Ascending aorta (tissue), 2 donors: ENCODE measurements at regions of chr18 and their contacts with region 1.

Region 1: DNA sequence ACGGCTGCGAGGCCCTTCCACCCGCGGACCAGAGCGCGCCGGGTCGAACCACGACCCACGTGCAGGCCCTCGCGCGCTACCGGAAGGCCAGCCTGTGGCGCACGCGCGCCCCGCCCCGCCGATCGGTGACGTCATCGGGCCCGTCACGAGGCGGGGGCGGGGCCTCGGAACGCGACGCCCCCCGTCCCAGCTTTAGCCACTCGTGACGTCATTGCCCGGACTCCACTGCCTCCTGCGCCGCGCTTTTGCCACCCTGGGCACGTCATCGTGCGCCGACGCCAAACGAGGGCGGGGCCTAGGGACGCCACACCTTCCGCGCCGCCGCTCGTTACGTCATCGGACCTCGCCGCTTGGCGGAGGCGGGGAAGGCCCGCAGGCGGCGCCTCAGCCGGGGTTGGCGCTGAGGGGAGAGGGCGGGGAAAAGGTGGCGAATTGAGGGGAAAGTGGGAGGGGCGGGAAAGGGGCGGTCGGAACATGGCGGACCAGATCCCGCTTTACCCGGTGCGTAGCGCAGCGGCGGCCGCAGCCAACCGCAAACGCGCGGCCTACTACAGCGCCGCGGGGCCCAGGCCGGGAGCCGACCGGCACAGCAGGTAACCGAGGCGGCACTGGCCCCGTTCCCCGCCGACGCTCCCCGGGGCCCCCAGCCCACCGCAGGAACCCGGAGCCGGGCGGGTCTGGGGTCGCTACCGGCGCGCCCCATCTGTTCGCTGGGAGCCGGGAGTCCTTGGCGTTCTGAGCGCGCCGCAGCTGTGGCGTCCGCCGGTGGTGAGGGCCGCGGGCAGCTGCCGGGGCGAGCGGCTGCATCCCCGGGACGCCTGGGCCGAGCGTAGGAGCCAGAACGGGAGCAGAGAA is at the start of gene ATP9B:
- DNase-seq: peak; percentile 87 to 98
- H3K4me3 ChIP-seq: peak within 1 kb of the TSS; percentile 89 to 91
- H3K27ac ChIP-seq: peak within 1 kb of the TSS; percentile 93 to 99
- H3K4me1 ChIP-seq: peaks cover 3 to 17% of the 10 kb centered on the region in 2 donors
- H3K27me3 ChIP-seq: no peaks in the 10 kb centered on the region
- CTCF ChIP-seq: no peak
- total RNA-seq, gene ATP9B: 14.4 TPM

Region 2: GRCh38 chr18:79217979-79218604 is 148.9 kb after region 1 on chr18:
- intact Hi-C with region 1: loop called (anchors 5 kb)
- DNase-seq: no peak
- H3K4me3 ChIP-seq: peak overlapping the region; percentile 6 to 32
- H3K27ac ChIP-seq: peak overlapping the region; percentile 37 to 66
- H3K4me1 ChIP-seq: peaks cover 0 to 4% of the 10 kb centered on the region in 2 donors
- H3K27me3 ChIP-seq: no peaks in the 10 kb centered on the region
- CTCF ChIP-seq: no peak

Region 3: DNA sequence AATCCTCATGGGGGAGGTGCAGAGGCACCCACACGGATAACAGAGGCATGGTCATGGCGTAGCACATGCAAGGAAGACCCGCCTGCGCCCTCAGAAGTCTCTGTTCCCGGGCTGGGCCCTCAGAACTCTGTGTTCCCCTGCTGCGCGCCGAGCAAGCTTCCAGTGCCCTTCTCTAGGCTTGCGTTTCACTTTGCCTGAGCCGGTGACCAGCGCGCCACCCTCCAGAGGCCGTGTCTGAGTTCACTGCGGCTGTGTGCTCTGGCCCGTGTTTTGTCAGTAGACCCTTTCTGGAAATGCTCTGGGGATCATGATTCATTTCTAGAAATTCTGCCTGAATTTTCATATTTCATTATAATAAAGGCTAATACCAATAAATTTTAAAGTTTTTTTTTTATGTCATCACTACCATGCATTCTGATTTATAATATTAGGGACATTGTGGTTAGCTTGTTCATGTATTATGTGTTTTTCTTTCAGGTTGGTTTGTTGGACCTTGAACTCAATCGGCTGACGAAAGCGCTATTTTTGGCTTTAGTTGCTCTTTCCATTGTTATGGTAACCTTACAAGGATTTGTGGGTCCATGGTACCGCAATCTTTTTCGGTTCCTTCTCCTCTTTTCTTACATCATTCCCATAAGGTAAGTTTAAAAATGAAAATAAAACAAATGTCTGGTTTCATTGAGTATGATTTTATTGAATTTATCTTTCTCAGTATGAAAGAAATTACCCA is 183.9 kb after region 1 on chr18:
- intact Hi-C with region 1: loop called (anchors 2 kb)
- DNase-seq: peak in 1 of 2 donors; percentile 76
- H3K4me3 ChIP-seq: peak overlapping the region; percentile 14 to 54
- H3K27ac ChIP-seq: peak overlapping the region; percentile 79 to 83
- H3K4me1 ChIP-seq: peaks cover 0 to 6% of the 10 kb centered on the region in 2 donors
- H3K27me3 ChIP-seq: no peaks in the 10 kb centered on the region
- CTCF ChIP-seq: no peak

Region 4: GRCh38 chr18:79393635-79394533 is 324.7 kb after region 1 on chr18:
- intact Hi-C with region 1: loop called (anchors 5 kb)
- DNase-seq: peak; percentile 63 to 94
- H3K4me3 ChIP-seq: peak overlapping the region; percentile 77 to 92
- H3K27ac ChIP-seq: peak overlapping the region; percentile 98 to 99
- H3K4me1 ChIP-seq: peaks cover 5 to 17% of the 10 kb centered on the region in 2 donors
- H3K27me3 ChIP-seq: no peaks in the 10 kb centered on the region
- CTCF ChIP-seq: no peak

Region 5: DNA sequence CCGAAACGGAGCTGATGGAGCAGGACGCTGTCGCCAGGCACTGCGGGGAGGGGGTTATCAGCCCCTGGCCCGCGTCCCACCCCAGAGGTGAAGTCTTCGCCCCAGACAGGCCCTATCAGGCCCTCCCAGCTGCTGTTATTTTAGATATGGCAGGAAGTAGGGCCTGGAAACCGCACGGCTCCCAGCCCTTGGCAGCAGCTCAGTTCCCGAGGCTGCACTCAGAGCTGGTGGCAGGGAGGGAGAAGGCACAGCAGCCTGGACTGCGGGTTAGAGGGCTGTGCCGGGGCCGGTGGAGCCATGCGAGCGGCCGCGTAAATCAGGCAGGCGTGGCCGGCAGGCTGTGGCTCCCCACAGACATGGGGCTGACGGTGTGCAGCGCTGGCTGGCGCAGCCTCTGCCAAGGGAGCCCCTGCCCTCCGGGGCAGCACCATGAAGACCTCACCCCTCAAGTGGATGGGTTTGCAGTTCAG is 437.9 kb after region 1 on chr18:
- intact Hi-C with region 1: loop called (anchors 10 kb)
- DNase-seq: peak in 1 of 2 donors; percentile 82
- H3K4me3 ChIP-seq: peak overlapping the region; percentile 57 to 59
- H3K27ac ChIP-seq: peak overlapping the region; percentile 90 to 93
- H3K4me1 ChIP-seq: peaks cover 7 to 31% of the 10 kb centered on the region in 2 donors
- H3K27me3 ChIP-seq: no peaks in the 10 kb centered on the region
- CTCF ChIP-seq: no peak

Region 6: GRCh38 chr18:79679111-79679872 is 610.1 kb after region 1 on chr18 and contains the start of gene CTDP1:
- intact Hi-C with region 1: loop called (anchors 1 kb)
- DNase-seq: peak; percentile 96 to 99
- H3K4me3 ChIP-seq: peak within 1 kb of the TSS; percentile 92 to 99
- H3K27ac ChIP-seq: peak within 1 kb of the TSS; percentile 98 to 100
- H3K4me1 ChIP-seq: peaks cover 2 to 18% of the 10 kb centered on the region in 2 donors
- H3K27me3 ChIP-seq: no peaks in the 10 kb centered on the region
- CTCF ChIP-seq: no peak
- total RNA-seq, gene CTDP1: 31.7 TPM

Region 7: DNA sequence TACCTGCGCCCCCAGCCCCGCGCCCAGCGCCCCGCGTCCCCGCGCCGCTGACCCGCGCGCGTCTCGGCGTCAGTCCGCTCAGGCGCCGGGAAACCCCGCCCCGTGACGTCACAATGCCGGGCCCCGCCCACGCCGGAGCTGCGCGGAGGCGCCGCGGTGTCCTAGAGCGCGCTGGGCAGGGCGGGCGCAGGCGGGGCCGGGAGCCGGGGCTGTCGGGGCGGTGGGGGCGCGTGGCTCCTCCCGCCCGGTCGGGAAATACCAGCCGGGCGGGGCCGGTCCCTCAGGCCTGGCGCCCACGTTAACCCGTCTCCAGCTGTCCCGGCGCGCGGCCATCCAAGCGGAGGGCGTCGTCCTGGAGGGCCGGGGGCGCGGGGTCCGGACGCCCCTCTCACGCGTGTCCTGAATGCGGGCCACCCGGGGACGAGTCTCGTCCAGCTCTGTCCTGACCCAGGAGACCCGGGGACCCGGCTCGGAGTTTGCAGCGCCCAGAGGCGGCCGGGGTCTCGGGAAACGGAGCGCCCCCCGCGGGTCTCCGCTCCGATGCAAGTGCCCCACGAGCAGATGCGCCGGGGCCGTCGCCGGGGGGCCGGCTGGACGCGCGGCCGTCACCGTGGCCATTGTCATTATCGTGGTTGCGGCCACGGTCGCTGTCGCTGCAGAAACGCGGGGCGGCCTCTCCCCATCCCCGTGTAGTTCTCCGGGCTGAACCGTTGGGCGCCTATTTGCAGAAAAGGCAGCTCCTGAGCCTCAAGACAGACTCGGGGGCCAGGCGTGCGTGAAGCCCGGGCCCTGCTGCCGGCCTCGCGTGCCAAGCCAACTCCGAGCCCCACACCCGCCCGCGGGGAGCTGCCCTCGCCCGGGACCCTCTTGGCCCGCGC is 882.7 kb after region 1 on chr18 and contains the start of gene SLC66A2:
- intact Hi-C with region 1: loop called (anchors 10 kb)
- DNase-seq: peak; percentile 68 to 95
- H3K4me3 ChIP-seq: peak within 1 kb of the TSS; percentile 98 to 100
- H3K27ac ChIP-seq: peak within 1 kb of the TSS; percentile 68 to 75
- H3K4me1 ChIP-seq: peaks cover 11 to 20% of the 10 kb centered on the region in 2 donors
- H3K27me3 ChIP-seq: no peaks in the 10 kb centered on the region
- CTCF ChIP-seq: peak in 1 of 3 experiments; percentile 4
- total RNA-seq, gene SLC66A2: 52.9 TPM